Activated CD4-positive, alpha-beta memory T cell treated with anti-CD3 and anti-CD28 coated beads for 36 hours (primary cell): ENCODE measurements at regions of chr1 and their contacts with region 1.

Region 1: DNA sequence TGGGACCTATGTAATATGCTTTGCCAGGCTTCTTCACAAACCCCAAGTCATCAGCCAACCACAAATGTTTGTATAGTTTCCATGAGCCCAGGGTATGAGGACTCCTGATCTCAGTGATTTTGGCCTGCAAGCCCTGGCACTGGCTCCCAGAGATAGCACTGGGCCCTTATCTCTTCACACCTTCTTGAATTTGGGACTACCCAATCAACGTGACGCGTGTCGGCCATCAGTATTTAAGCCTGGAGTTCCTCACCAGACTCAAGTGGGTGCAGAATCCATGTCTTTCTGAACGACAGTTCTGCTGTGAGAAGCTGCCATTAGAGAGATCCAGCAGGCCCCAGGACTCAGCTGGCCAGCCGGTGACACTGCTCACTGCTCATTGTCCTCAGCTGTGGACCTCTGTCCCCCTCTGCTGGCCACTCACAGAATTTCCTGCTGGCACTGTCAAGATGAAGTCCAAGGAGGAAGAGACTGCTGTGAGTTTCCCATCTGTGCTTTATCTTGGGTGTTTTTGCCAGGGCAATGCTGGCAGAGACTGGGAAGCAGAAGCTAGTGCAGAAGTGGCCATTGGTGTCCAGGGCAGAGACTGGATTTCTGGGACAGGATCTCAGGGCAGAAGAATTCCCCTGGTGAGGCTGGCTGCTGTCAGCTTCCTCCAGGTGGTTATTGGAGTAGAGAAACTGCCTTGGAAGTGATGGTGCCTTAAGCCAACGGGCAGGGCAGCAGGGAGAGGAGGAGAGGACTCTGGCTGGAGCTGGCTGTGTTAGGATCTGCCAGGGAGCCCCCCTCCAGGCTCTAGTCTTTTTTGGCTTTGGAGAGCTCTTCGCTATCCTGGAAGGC is 28.4 kb downstream of the TMCC2 start:
- DNase-seq: peak; percentile 92
- H3K4me3 Mint-ChIP-seq: no peak overlapping the region
- H3K27ac Mint-ChIP-seq: no peak overlapping the region
- H3K4me1 Mint-ChIP-seq: no peaks in the 10 kb centered on the region
- H3K27me3 Mint-ChIP-seq: peaks cover 4% of the 10 kb centered on the region

Region 2: DNA sequence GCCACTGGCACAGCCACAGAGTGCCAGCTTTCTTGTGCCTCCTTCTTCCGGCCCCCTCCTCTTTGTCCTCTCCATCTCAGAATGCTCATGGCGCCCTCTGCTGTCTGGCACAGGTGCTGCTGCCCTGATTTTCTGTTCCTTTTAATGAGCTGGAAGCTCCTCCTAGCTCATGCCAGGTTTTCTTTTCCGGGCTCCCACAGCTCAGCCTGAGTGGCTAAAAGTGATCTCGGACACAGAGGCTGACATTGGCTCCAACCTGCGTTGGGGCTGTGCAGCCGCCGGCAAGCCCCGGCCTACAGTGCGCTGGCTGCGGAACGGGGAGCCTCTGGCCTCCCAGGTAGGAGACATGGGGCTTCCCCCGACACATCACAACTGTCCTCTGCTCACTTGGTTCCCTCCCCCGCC is 194.5 kb before region 1 on chr1:
- CTCF ChIA-PET with region 1: interaction called, 21 read pairs
- POLR2A ChIA-PET with region 1: no interaction called
- intact Hi-C with region 1: loop called (anchors 1 kb)
- DNase-seq: peak; percentile 82
- H3K4me3 Mint-ChIP-seq: no peak overlapping the region
- H3K27ac Mint-ChIP-seq: no peak overlapping the region
- H3K4me1 Mint-ChIP-seq: no peaks in the 10 kb centered on the region
- H3K27me3 Mint-ChIP-seq: no peaks in the 10 kb centered on the region

Region 3: DNA sequence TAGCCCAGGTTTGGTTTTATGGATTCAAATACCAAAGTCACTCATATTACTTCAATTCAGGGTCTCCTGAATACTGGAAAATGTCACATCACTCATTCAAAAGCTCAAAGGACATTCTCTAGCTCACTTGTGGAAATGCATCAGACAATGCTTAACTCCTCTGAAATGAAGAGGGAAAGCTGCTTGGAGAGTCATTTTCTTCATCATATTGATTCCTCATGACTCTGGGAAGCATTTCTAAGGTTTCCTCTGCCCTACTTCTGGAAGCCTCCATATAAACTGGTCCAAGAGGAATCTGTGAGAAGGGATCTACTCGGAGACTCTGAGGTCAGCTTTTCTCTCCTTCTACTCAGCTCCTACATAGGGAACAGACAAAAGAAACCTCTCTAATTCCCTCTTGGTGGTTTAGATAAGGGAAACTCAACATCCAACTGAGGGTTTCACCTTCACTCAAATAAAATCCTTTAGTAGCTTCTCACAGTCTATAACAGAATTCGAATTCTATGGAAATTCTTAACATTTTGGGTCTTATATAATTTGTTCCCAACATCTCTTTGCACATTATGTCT is 98.0 kb before region 1 on chr1:
- CTCF ChIA-PET with region 1: interaction called, 13 read pairs
- POLR2A ChIA-PET with region 1: no interaction called
- intact Hi-C with region 1: no loop called
- DNase-seq: no peak
- H3K4me3 Mint-ChIP-seq: no peak overlapping the region
- H3K27ac Mint-ChIP-seq: no peak overlapping the region
- H3K4me1 Mint-ChIP-seq: no peaks in the 10 kb centered on the region
- H3K27me3 Mint-ChIP-seq: no peaks in the 10 kb centered on the region

Region 4: GRCh38 chr1:205217418-205217817 is 38.7 kb before region 1 on chr1:
- CTCF ChIA-PET with region 1: interaction called, 14 read pairs
- POLR2A ChIA-PET with region 1: no interaction called
- intact Hi-C with region 1: no loop called
- DNase-seq: no peak
- H3K4me3 Mint-ChIP-seq: no peak overlapping the region
- H3K27ac Mint-ChIP-seq: no peak overlapping the region
- H3K4me1 Mint-ChIP-seq: peaks cover 12% of the 10 kb centered on the region
- H3K27me3 Mint-ChIP-seq: peaks cover 1% of the 10 kb centered on the region

Region 5: GRCh38 chr1:205273551-205273982 is 17.4 kb after region 1 on chr1:
- CTCF ChIA-PET with region 1: interaction called, 27 read pairs
- POLR2A ChIA-PET with region 1: no interaction called
- intact Hi-C with region 1: no loop called
- DNase-seq: peak; percentile 91
- H3K4me3 Mint-ChIP-seq: no peak overlapping the region
- H3K27ac Mint-ChIP-seq: no peak overlapping the region
- H3K4me1 Mint-ChIP-seq: peaks cover 30% of the 10 kb centered on the region
- H3K27me3 Mint-ChIP-seq: no peaks in the 10 kb centered on the region